ENCODE measurements at regions of chr3 and their contacts with region 1.

Region 1: DNA sequence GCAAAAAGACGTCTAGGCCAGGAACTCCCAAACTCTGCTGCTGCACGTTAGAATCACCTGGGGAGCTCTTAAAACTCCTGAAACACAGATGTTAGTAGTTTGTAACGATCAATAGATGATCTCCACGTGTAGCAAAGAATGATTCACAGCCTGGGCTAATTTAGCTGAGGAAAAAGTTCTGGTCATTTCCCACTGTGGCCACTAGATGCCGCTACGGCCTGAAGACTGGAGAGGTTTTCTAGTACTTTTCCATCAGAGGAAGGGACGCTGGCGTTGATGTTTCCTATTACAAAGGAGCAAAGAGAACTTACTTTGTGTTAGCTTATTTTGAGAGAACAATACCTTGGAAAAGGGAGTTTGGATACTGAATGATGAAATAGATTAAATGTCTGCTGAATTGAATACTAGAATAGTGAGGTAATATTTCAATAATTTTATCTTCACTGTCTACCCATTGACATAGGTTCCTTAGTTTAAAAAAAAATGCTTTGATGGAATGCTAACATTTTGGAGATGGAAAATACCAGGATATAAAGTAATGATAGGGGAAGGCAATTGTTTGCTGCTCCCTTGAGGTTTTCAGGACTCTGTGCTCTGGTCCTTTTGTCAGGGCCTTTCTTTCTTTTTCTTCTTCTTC is 159.1 kb downstream of the P3H2 start:
- DNase-seq: peak; percentile 75
- ATAC-seq: peak; percentile 76 to 85

Region 2: DNA sequence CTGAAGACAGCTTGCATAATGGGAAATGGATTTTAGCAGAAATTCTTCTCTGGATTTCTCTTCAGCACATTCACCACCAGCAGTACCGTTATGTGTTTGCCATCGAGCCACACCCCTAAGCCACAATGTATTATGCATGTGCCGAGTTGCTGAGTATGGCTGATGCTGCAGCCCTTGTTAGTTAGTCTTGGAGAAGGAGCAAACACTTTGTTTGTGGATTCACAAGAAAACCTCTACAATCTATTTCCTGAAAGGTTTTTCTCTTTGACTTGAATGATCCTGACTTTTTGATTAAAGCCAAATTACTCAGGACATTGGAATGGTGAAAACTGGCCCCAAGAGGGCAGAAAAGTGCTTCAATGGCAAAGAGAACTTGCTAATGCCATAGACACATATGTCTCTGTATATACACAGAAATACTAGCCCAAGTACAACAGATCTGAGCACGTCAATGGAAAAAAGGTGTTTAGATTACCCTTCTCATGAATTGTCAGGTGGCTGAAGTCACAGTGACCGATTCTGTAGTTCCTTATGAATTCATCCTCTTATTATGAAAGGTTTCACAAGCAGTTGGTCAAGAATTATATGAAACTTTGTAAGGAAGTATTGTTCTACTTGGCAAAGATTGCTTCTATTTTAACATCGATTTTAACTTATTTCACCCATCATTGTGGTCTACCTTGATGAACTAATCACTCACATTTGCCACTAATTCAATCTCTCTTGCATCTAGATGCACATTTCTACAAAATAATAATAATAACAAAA is 56.1 kb after region 1 on chr3:
- intact Hi-C with region 1: no loop called
- DNase-seq: no peak
- ATAC-seq: peak in 1 of 2 donors; percentile 42

Region 3: GRCh38 chr3:190321789-190322603 is 360.4 kb after region 1 on chr3 and contains the start of gene CLDN1:
- intact Hi-C with region 1: loop called (anchors 5 to 10 kb)
- DNase-seq: peak; percentile 86
- ATAC-seq: peak; percentile 90 to 94
- total RNA-seq, gene CLDN1: 4.4 to 4.5 TPM

Region 4: DNA sequence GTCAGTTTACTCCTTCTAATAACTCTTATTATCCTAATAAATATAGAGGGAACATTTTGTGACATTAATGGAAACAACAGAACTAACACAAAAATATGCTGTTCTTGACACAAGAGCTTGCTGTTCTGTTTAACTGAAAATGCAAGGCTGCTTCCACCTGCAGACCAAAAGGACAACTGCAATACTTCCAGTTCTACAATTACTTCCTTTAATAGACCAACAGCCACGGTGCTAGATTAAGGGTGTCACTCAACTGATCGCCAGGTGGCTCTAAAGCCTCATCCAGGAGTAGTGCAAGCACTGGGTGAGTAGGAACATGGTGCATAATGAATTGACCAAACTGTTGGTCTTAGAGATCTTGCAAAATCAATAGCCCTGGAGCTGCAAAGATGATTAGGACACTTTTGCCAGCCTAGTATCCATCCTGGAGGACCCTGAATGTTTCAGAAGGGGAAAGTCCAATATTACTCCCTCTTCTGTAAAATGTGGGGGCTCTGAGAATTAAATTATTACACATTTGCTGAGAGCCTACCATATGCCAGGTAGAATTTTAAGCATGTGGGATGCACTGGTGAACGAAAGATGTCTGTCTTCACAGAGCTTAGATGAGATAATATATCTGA is 422.7 kb after region 1 on chr3:
- intact Hi-C with region 1: loop called in 1 of 2 experiments (anchors 10 kb)
- DNase-seq: no peak
- ATAC-seq: peak; percentile 71

Region 5: GRCh38 chr3:190424478-190425439 is 463.1 kb after region 1 on chr3:
- intact Hi-C with region 1: loop called in 1 of 2 experiments (anchors 10 kb)
- DNase-seq: peak; percentile 48
- ATAC-seq: peak; percentile 44 to 55

Region 6: DNA sequence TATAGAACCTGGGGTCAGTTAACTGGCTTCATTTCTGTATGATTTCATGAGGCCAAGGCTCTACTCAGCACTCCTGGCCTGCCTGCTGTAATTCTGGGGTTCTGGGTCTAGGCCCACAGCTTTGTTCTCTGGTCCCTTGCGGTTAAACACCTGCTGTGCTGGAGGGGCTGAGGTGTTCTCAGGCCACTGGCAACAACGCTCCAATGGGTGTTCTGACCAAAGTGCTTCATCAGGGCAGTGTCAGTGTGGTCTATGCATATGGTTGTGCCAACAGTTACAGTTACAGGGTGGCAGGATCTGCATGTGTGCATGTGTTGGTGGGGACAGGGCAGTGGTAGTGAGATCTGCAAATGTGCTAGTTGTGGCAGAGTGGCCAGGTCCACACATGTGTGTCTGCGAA is 965.0 kb after region 1 on chr3:
- intact Hi-C with region 1: no loop called
- DNase-seq: no peak
- ATAC-seq: no peak

Measured in left cardiac atrium (tissue), 4 donors.